Caco-2 (cell line): ENCODE measurements at regions of chr2 and their contacts with region 1.

Region 1: DNA sequence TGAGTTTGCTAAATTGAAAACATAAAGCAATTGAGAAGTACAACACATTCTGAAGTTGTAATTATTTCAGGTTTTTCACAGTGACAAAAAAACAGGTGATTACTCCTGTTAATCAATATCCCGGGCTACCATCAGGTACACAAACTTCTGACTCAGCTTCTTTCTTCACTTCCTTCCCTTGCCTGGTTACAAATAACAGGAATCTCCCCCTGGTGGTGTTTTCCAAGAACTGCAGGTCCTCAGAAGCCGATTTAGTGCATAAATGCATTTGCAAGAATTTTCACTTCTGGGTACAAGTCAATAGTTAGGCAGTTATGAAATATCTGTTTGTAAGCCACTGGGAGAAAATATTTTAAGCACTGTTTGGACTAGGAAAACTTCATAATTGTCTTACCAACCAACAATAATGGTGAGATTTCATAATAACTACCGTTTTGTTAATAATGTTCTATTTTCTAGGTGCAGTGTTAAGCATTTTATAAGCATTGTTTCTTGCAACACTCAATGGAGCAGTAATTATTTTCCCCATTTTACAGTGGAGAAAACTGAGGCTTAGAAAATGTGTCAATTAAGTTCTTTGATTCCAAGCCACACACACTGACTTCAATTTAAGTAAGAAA is 12.4 kb upstream of the GMCL1 start:
- DNase-seq: peak; percentile 83 to 84
- H3K4me3 ChIP-seq: no peak overlapping the region
- H3K4me3 Mint-ChIP-seq: no peak overlapping the region
- H3K27ac Mint-ChIP-seq: no peak overlapping the region
- H3K4me1 ChIP-seq: no peaks in the 10 kb centered on the region
- H3K4me1 Mint-ChIP-seq: no peaks in the 10 kb centered on the region
- H3K27me3 ChIP-seq: no peaks in the 10 kb centered on the region
- H3K27me3 Mint-ChIP-seq: no peaks in the 10 kb centered on the region
- CTCF ChIP-seq: peak; percentile 90 to 91

Region 2: DNA sequence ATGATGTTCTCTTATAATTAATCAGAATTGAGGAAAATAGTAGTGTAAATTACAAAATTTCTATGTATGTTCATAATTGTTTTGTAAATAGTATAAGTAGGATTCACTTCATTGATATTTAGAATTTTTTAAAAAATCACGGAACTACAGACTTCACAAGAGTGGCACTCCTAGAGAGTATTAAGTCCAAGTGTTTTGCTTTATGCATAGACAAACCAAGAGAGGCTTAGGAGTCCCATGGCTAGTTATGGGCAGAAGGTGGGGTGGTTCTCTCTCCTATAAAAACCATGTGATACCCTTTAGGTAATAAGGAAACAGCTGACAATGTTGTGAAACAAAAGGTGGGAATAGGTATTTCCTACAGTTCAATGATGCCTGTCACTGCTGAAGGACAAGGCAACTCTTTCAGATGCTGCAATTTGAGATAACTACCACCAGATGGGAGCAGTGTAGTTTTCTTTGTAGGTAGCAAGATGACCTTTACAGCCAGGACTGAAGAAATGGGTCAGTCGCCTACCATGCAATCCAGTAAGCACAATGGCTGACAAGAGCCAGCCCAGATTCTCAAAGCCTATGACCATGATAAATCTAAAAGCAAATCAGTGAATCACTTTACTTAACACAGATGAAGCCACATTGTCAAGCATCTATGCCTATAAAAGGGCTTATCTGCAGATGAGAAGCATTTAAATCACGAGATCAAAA is 257.4 kb before region 1 on chr2:
- CTCF ChIA-PET with region 1: no interaction called
- POLR2A ChIA-PET with region 1: no interaction called
- intact Hi-C with region 1: loop called (anchors 1 kb)
- DNase-seq: peak in 1 of 2 experiments; percentile 65
- H3K4me3 ChIP-seq: no peak overlapping the region
- H3K4me3 Mint-ChIP-seq: no peak overlapping the region
- H3K27ac Mint-ChIP-seq: no peak overlapping the region
- H3K4me1 ChIP-seq: peaks cover 16% of the 10 kb centered on the region
- H3K4me1 Mint-ChIP-seq: peaks cover 33% of the 10 kb centered on the region
- H3K27me3 ChIP-seq: no peaks in the 10 kb centered on the region
- H3K27me3 Mint-ChIP-seq: no peaks in the 10 kb centered on the region
- CTCF ChIP-seq: peak; percentile 71 to 83

Region 3: DNA sequence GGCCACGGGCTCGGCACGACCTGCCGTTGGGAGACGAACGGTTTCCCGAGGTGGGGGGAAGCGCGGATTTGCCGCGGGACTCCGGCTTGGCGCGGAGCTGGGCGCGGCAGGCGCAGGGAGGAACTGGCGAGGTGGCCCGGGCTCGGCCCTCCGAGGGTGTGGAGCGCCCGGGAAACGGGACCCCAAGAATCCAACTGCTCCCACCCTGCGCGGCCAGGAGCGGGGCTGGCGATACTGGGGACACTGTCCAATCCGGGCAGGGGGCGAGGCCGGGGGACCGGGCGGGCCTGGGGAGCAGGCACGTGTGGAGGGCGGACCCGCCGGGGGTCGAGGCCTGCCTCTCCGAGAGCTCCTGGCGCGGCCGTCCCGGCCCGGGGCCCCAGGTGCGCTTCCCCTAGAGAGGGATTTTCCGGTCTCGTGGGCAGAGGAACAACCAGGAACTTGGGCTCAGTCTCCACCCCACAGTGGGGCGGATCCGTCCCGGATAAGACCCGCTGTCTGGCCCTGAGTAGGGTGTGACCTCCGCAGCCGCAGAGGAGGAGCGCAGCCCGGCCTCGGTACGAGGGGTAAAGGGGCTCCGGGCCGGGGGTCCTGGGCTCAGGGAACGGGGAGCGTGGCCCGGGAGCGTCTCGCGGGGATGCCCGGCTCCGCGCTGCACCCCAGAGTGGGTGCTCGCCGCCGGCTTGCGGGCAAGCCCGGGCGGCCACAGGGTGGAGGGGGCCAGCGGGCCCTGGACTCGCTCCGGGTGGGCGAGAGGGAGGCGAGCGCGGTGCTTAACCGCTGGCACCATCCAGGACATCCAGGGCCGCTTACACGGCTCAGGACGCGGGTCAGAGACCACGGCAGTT is 75.2 kb before region 1 on chr2 and contains the start of gene ANXA4:
- CTCF ChIA-PET with region 1: interaction called, 15 read pairs
- POLR2A ChIA-PET with region 1: interaction called, 7 read pairs
- intact Hi-C with region 1: loop called (anchors 1 kb)
- DNase-seq: peak; percentile 92 to 93
- H3K4me3 ChIP-seq: peak within 1 kb of the TSS; percentile 78
- H3K4me3 Mint-ChIP-seq: peak within 1 kb of the TSS; percentile 97
- H3K27ac Mint-ChIP-seq: peak within 1 kb of the TSS; percentile 96
- H3K4me1 ChIP-seq: peaks cover 20% of the 10 kb centered on the region
- H3K4me1 Mint-ChIP-seq: peaks cover 23% of the 10 kb centered on the region
- H3K27me3 ChIP-seq: no peaks in the 10 kb centered on the region
- H3K27me3 Mint-ChIP-seq: no peaks in the 10 kb centered on the region
- CTCF ChIP-seq: no peak
- total RNA-seq, gene ANXA4: 90.8 and 92.0 TPM in 2 replicates

Region 4: DNA sequence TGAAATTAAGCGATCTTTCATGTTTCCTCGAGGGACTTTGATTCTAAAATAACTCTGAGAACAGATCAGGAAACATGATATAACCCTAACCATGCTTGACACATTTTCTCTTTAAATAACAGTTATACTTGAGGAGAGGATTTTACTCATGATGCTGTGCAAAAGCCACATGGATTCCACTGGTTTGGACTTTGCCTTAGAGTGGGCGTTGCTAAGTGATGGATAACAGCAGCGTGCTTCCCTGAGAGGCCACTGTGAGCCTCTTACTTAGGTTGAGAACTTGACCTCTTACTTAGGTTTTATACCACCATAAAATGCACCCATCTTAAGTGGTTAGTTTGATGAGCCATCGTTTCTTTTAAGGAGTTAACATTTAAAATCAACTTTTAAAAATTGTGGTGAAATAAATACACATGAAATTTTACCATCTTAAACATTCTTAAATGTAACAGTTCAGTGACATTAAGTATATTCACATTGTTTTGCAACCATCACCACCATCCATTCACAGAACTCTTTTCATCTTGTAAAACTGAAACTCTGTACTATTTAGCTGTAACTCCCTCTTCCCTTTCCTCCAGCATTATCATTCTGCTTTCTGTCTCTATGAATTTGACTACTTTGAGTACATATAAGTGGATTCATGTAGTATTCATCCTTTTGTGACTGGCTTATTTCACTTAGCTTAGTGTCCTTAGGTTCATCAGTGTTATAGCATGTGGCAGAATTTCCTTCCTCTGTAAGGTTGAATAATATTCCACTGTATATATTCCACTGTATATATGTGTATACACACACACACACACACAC is 52.5 kb before region 1 on chr2:
- CTCF ChIA-PET with region 1: interaction called, 6 read pairs
- POLR2A ChIA-PET with region 1: no interaction called
- intact Hi-C with region 1: loop called (anchors 1 kb)
- DNase-seq: peak; percentile 76 to 79
- H3K4me3 ChIP-seq: no peak overlapping the region
- H3K4me3 Mint-ChIP-seq: peak overlapping the region; percentile 42
- H3K27ac Mint-ChIP-seq: peak overlapping the region; percentile 17
- H3K4me1 ChIP-seq: peaks cover 47% of the 10 kb centered on the region
- H3K4me1 Mint-ChIP-seq: peaks cover 54% of the 10 kb centered on the region
- H3K27me3 ChIP-seq: no peaks in the 10 kb centered on the region
- H3K27me3 Mint-ChIP-seq: no peaks in the 10 kb centered on the region
- CTCF ChIP-seq: no peak

Region 5: GRCh38 chr2:69781321-69782248 is 35.4 kb before region 1 on chr2:
- CTCF ChIA-PET with region 1: interaction called, 4 read pairs
- POLR2A ChIA-PET with region 1: interaction called, 3 read pairs
- intact Hi-C with region 1: loop called (anchors 2 kb)
- DNase-seq: peak; percentile 67 to 79
- H3K4me3 ChIP-seq: no peak overlapping the region
- H3K4me3 Mint-ChIP-seq: no peak overlapping the region
- H3K27ac Mint-ChIP-seq: peak overlapping the region; percentile 16
- H3K4me1 ChIP-seq: peaks cover 62% of the 10 kb centered on the region
- H3K4me1 Mint-ChIP-seq: peaks cover 39% of the 10 kb centered on the region
- H3K27me3 ChIP-seq: no peaks in the 10 kb centered on the region
- H3K27me3 Mint-ChIP-seq: no peaks in the 10 kb centered on the region
- CTCF ChIP-seq: no peak

Region 6: DNA sequence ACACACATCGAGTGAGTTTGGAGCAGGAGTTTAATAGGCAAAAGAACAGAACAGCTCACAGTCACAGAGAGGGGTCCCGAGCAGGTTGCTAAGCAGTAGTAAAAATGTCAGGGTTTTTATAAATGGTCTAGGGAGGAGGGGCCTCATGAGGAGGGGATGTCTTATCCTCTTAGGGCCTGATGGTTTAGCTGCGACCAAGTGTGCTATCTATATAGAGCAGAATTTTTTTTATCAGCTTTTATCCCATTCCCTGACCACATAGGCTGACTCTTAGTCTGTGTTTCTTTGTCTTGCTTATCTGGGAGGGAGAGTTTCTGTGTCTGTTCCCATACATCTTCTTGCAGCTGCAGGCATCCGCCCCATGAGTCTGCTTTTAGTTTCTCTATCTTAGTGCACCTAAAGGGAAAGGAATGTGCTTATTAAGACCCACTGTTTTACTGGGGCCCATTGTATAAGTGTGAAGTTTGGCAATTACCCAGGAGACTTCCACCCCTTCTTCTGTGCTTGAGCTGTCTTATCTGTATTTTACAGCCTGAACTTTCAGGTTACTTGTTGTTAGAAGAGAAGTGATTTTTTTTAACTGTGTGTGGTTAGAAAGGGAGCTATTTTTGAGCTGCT is 18.0 kb before region 1 on chr2:
- CTCF ChIA-PET with region 1: interaction called, 5 read pairs
- POLR2A ChIA-PET with region 1: no interaction called
- intact Hi-C with region 1: loop called (anchors 1 kb)
- DNase-seq: peak; percentile 63 to 71
- H3K4me3 ChIP-seq: peak overlapping the region; percentile 33
- H3K4me3 Mint-ChIP-seq: peak overlapping the region; percentile 71
- H3K27ac Mint-ChIP-seq: peak overlapping the region; percentile 92
- H3K4me1 ChIP-seq: peaks cover 49% of the 10 kb centered on the region
- H3K4me1 Mint-ChIP-seq: peaks cover 60% of the 10 kb centered on the region
- H3K27me3 ChIP-seq: no peaks in the 10 kb centered on the region
- H3K27me3 Mint-ChIP-seq: no peaks in the 10 kb centered on the region
- CTCF ChIP-seq: no peak